T-cell (primary cell): ENCODE measurements at regions of chr3 and their contacts with region 1.

Region 1: DNA sequence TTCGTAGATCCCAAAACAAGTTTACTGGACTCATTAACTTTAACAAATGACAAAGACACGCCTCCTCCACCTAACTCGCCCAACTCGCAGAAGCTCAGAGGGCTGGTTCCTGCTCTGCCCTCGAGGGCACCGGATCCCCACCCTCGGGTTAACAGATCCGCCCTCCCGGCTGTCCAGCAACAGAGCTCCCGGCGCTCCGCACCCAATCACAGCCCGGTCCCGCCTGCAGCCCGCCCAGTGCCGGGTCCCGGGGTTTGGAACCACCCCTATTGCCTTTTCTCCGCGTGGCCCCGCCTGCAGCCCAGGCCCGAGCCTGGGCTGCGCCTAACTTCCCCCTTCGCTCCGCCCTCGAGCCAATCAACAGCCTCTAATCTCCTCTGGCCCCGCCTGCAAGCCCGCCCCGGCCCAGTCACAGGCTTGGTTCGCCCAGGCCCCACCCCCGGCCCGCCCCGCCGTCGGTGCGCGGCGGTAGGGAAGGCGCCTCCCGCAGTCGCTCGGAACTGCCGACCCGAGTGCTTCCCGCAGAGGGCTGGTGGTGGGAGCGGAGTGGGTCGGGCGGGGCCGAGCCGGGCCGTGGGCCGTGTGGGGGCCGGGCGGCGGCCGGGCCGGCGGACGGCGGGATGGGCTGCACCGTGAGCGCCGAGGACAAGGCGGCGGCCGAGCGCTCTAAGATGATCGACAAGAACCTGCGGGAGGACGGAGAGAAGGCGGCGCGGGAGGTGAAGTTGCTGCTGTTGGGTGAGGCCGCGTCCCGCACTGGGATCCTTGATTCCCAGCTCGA is at the start of gene GNAI2:
- DNase-seq: peak; percentile 96 to 100 (median 99)
- ATAC-seq: peak; percentile 85 to 90 (median 88)
- H3K4me3 ChIP-seq: peak within 1 kb of the TSS; percentile 98 to 99
- H3K4me3 Mint-ChIP-seq: peak within 1 kb of the TSS; percentile 95 to 98 (median 97)
- H3K27ac ChIP-seq: peak within 1 kb of the TSS; percentile 82
- H3K27ac Mint-ChIP-seq: peak within 1 kb of the TSS; percentile 95 to 96
- H3K4me1 ChIP-seq: peaks cover 24 to 50% of the 10 kb centered on the region in 2 experiments
- H3K4me1 Mint-ChIP-seq: peaks cover 34 to 54% (median 39%) of the 10 kb centered on the region in 3 donors
- H3K27me3 ChIP-seq: no peaks in the 10 kb centered on the region
- H3K27me3 Mint-ChIP-seq: no peaks in the 10 kb centered on the region
- total RNA-seq, gene GNAI2: 257 to 313 (median 287) TPM

Region 2: GRCh38 chr3:49673715-49674496 is 562.0 kb before region 1 on chr3 and contains the start of gene APEH:
- CTCF ChIA-PET with region 1: no interaction called
- POLR2A ChIA-PET with region 1: no interaction called
- DNase-seq: peak; percentile 91 to 99 (median 95)
- ATAC-seq: peak; percentile 85 to 89 (median 86)
- H3K4me3 ChIP-seq: peak within 1 kb of the TSS; percentile 63 to 80
- H3K4me3 Mint-ChIP-seq: peak within 1 kb of the TSS; percentile 87 to 93 (median 90)
- H3K27ac ChIP-seq: peak within 1 kb of the TSS; percentile 90
- H3K27ac Mint-ChIP-seq: peak within 1 kb of the TSS; percentile 93 to 97
- H3K4me1 ChIP-seq: peaks cover 12 to 41% of the 10 kb centered on the region in 2 experiments
- H3K4me1 Mint-ChIP-seq: peaks cover 41 to 42% (median 42%) of the 10 kb centered on the region in 3 donors
- H3K27me3 ChIP-seq: no peaks in the 10 kb centered on the region
- H3K27me3 Mint-ChIP-seq: no peaks in the 10 kb centered on the region
- total RNA-seq, gene APEH: 82.8 to 162 (median 141) TPM

Region 3: DNA sequence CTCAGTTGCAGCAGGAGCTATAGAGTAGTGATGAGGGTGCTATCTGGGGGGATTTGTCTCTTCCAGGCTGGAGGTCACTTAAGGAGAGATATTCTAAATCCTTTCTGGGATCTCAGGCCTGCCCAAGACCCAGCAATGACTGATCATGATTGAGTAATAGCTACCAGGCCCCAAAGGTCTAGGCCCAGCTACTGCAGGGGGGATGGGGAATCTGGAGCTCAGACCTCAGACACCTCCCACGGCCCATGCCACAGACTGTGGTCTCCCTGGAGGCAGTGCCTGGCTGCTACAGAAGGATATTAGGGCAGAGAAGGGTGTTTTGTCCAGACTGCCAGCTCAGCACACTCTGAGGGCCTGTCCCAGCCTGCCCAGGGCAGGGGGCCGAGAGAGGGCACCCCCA is 24.0 kb before region 1 on chr3:
- CTCF ChIA-PET with region 1: no interaction called
- POLR2A ChIA-PET with region 1: interaction called in 1 of 2 experiments, 11 read pairs
- DNase-seq: no peak
- ATAC-seq: no peak
- H3K4me3 ChIP-seq: no peak overlapping the region
- H3K4me3 Mint-ChIP-seq: no peak overlapping the region
- H3K27ac ChIP-seq: no peak overlapping the region
- H3K27ac Mint-ChIP-seq: no peak overlapping the region
- H3K4me1 ChIP-seq: no peaks in the 10 kb centered on the region
- H3K4me1 Mint-ChIP-seq: peaks cover 0 to under 1% (median 0%) of the 10 kb centered on the region in 3 donors
- H3K27me3 ChIP-seq: peaks cover 0 to 53% of the 10 kb centered on the region in 2 experiments
- H3K27me3 Mint-ChIP-seq: peaks cover 5 to 13% of the 10 kb centered on the region in 2 donors